Ovary (tissue), 10 donors: ENCODE measurements at regions of chr15 and their contacts with region 1.

Region 1: DNA sequence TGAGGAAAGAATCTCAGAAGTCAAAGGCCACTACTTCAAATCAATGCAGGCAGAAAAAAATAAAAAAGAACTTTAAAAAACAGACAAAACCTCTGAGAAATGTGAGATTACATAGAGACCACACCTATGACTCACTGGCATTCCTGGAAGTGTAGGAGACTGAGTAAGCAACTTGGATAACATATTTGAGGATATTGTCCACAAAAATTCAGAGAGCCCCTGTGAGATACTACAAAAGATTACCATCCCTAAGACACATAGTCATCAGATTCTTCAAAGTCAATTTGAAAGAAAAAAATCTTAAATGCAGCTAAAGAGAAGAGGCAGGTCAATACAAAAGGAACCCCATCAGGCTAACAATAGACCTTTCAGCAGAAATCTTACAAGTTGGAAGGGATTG is 887.3 kb downstream of the NTRK3 start:
- DNase-seq: no peak
- H3K4me3 ChIP-seq: no peak overlapping the region
- H3K27ac ChIP-seq: no peak overlapping the region
- H3K4me1 ChIP-seq: no peaks in the 10 kb centered on the region
- H3K27me3 ChIP-seq: no peaks in the 10 kb centered on the region
- CTCF ChIP-seq: no peak
- EP300 ChIP-seq: no peak
- POLR2A ChIP-seq: no peak

Region 2: DNA sequence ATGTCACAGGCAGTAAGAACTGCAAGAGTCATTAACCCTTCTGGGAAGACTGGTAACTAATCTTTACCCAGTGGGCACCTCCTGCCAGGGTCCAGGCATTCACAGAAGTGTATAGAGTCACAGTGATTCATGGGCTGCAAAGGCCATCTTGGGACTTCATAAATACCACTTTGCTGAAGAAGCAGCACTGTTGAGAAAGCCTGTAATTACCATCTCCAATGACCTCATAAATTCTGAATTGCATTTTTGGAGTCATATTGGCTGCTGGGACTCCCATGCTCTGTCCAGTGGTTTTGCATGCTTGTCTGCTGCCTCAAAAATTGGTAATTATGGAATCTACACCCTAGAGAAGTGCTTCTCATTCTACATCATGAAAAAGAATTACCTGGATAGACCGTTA is 50.1 kb after region 1 on chr15:
- intact Hi-C with region 1: loop called in 1 of 4 experiments (anchors 10 kb)
- DNase-seq: no peak
- H3K4me3 ChIP-seq: no peak overlapping the region
- H3K27ac ChIP-seq: no peak overlapping the region
- H3K4me1 ChIP-seq: no peaks in the 10 kb centered on the region
- H3K27me3 ChIP-seq: no peaks in the 10 kb centered on the region
- CTCF ChIP-seq: no peak
- EP300 ChIP-seq: no peak
- POLR2A ChIP-seq: no peak